ENCODE measurements at regions of chr12 and their contacts with region 1.

Region 1: GRCh38 chr12:39764944-39765560 is 145.4 kb upstream of the ABCD2 start:
- DNase-seq: no peak
- H3K4me3 ChIP-seq: no peak overlapping the region
- CTCF ChIP-seq: no peak
- POLR2A ChIP-seq: no peak

Region 2: GRCh38 chr12:39990122-39991101 is 225.4 kb after region 1 on chr12:
- intact Hi-C with region 1: loop called (anchors 10 kb)
- DNase-seq: peak; percentile 28 to 87
- H3K4me3 ChIP-seq: no peak overlapping the region
- CTCF ChIP-seq: no peak
- POLR2A ChIP-seq: no peak

Measured in lower leg skin (tissue), 4 donors.